ENCODE measurements at regions of chr17 and their contacts with region 1.

Region 1: GRCh38 chr17:17425591-17425990 is 51.2 kb upstream of the MED9 start:
- DNase-seq: peak in 2 of 5 donors; percentile 39 to 54
- ATAC-seq: peak in 3 of 4 donors; percentile 17 to 74 (median 39)
- H3K4me3 ChIP-seq: no peak overlapping the region
- H3K27ac ChIP-seq: peak overlapping the region in 8 of 12 donors; percentile 22 to 61 (median 36)
- H3K4me1 ChIP-seq: peaks cover 0 to 32% (median 2%) of the 10 kb centered on the region in 12 donors
- H3K27me3 ChIP-seq: no peaks in the 10 kb centered on the region
- CTCF ChIP-seq: no peak
- POLR2A ChIP-seq: no peak

Region 2: DNA sequence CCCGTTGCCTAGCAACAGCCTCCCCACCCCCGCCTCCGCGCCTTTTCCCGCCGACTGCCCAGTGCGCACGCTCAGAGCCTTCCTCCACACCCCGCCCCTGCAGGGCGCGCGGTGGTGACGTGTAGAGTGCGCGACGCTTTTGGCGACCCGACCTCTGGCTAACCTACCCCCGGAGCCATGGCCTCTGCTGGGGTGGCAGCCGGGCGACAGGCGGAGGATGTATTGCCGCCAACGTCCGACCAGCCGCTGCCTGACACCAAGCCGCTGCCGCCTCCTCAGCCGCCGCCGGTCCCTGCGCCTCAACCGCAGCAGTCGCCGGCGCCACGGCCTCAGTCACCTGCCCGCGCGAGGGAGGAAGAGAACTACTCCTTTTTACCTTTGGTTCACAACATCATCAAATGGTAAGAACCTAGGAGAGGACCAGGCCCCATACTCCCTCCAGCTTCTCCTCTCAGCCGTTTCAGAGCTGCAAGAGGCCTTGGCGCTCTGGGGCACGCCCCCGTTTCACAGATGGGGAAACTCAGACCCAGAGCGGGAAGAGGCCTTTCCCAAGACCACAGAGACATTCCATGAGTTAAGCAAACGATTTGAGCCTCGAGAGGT is 51.4 kb after region 1 on chr17 and contains the start of gene MED9:
- intact Hi-C with region 1: loop called in 1 of 10 experiments (anchors 5 kb)
- DNase-seq: peak; percentile 93 to 97 (median 95)
- ATAC-seq: peak; percentile 95 to 99 (median 99)
- H3K4me3 ChIP-seq: peak within 1 kb of the TSS; percentile 63 to 98 (median 84)
- H3K27ac ChIP-seq: peak within 1 kb of the TSS; percentile 90 to 98 (median 94)
- H3K4me1 ChIP-seq: peaks cover 0 to 52% (median 41%) of the 10 kb centered on the region in 12 donors
- H3K27me3 ChIP-seq: no peaks in the 10 kb centered on the region
- CTCF ChIP-seq: no peak
- POLR2A ChIP-seq: peak; percentile 29 to 77
- total RNA-seq, gene MED9: 26.3 to 64.4 (median 33.0) TPM